ENCODE measurements at regions of chr1 and their contacts with region 1.

Region 1: GRCh38 chr1:85488126-85488525 is 23.2 kb upstream of the DDAH1 start:
- DNase-seq: no peak
- H3K4me3 ChIP-seq: no peak overlapping the region
- H3K27ac ChIP-seq: no peak overlapping the region
- H3K4me1 ChIP-seq: no peaks in the 10 kb centered on the region
- H3K27me3 ChIP-seq: no peaks in the 10 kb centered on the region
- CTCF ChIP-seq: no peak
- POLR2A ChIP-seq: no peak

Region 2: GRCh38 chr1:85438353-85438752 is 49.8 kb before region 1 on chr1:
- intact Hi-C with region 1: loop called (anchors 2 kb)
- DNase-seq: no peak
- H3K4me3 ChIP-seq: no peak overlapping the region
- H3K27ac ChIP-seq: no peak overlapping the region
- H3K4me1 ChIP-seq: no peaks in the 10 kb centered on the region
- H3K27me3 ChIP-seq: no peaks in the 10 kb centered on the region
- CTCF ChIP-seq: no peak
- POLR2A ChIP-seq: no peak

Region 3: GRCh38 chr1:85464497-85465098 is 23.5 kb before region 1 on chr1:
- intact Hi-C with region 1: no loop called
- DNase-seq: peak; percentile 30 to 56
- H3K4me3 ChIP-seq: peak overlapping the region; percentile 59 to 95 (median 70)
- H3K27ac ChIP-seq: peak overlapping the region; percentile 78 to 90
- H3K4me1 ChIP-seq: no peaks in the 10 kb centered on the region
- H3K27me3 ChIP-seq: no peaks in the 10 kb centered on the region
- CTCF ChIP-seq: no peak
- POLR2A ChIP-seq: no peak

Measured in breast epithelium (tissue), 4 donors.